Prostate gland (tissue), 2 donors: ENCODE measurements at regions of chr17 and their contacts with region 1.

Region 1: GRCh38 chr17:31558748-31559644 is 167.5 kb downstream of the RAB11FIP4 start:
- DNase-seq: peak; percentile 68
- H3K4me3 ChIP-seq: peak overlapping the region; percentile 56 to 74
- H3K27ac ChIP-seq: peak overlapping the region; percentile 91 to 92
- H3K4me1 ChIP-seq: peaks cover 14% of the 10 kb centered on the region
- H3K27me3 ChIP-seq: no peaks in the 10 kb centered on the region
- CTCF ChIP-seq: peak; percentile 87 to 97 (median 97)
- POLR2A ChIP-seq: peak; percentile 48

Region 2: DNA sequence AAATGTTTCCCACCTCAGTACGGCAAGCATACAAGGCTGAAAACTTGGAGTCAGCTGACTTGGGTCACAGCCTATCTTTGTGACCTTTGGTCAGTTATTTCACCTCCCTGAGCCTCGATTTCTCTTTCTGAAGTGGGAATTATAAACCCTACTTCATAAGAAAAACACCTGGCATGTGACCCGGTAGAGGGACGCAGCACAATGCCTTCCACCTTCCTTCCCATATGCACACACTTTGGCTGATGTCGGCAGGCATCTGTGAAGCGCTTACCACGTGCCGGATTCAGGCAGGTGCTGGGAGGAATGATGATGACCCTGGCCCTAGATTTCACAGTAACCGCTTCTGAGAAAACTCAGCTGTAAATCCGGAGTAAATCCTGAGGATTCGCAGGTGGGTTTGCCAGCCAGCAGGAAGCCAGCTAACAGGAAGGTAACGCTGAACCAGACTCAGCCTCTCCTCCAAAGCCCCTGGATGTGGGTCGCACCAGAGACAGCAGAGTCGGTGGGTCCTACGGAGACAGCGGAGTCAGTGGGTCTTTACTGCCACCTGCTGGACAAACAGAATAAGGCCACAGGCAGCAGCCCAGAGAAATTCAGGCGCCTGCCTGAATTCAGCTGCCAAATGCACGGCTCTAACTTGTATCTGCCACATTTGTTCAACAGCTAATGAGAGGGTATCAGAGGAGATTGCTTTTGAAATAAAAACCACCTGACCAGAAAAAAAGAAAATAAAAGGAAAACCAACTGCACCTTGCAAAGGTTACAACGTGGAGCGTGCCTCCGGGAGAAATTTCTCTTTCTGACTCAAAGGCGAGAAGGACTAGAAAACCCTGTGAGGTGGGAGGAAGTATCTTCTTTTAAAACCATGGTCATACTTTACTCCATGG is 283.4 kb after region 1 on chr17:
- intact Hi-C with region 1: loop called (anchors 1 kb)
- DNase-seq: peak; percentile 75
- H3K4me3 ChIP-seq: peak overlapping the region in 1 of 2 donors; percentile 10
- H3K27ac ChIP-seq: peak overlapping the region; percentile 65 to 71
- H3K4me1 ChIP-seq: peaks cover 6% of the 10 kb centered on the region
- H3K27me3 ChIP-seq: no peaks in the 10 kb centered on the region
- CTCF ChIP-seq: peak; percentile 95 to 98 (median 96)
- POLR2A ChIP-seq: no peak

Region 3: DNA sequence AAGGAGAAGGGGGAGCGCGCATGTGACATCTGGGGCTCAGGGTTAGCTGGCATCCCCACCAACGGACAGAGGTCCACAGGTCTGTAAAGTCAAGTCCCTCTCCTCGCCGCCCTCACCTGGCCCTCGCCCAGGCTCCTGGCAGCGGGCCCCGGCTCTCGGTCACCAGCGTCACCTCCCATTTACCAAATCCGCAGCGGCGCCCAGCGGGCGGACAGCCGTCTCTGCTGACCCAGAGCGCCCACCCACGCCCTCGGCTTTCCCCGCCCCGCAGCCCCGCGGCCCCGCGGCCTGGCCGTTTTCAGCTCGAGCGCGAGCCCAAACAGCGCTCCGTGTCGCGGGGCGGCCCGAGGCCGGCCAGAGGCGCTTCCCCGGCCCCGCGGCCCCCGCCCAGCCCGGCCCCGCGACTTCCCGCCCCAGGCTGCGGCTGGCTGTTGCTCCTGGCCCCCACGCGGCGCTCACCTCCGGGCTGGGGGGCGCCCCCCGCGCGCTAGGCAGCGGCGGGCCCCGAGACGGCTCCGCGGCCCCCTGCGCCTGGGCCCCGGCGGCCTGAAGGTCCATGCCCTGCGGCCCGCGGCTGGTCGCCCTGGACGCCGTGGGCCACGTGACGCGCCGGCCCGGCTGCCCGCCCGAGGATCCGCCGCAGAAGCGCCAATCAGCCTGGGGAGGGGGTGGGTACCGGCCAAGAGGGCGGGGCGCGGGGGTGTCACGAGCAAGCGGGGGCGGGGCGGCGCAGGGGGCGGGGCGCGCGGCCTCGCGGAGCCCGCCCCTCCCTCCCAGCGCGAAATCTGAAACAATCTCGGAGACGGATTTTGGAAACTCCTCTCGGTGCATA is 299.9 kb after region 1 on chr17 and contains the start of gene COPRS:
- intact Hi-C with region 1: loop called (anchors 5 kb)
- DNase-seq: peak; percentile 88
- H3K4me3 ChIP-seq: peak within 1 kb of the TSS; percentile 83 to 88
- H3K27ac ChIP-seq: peak within 1 kb of the TSS; percentile 84 to 90
- H3K4me1 ChIP-seq: peaks cover 4% of the 10 kb centered on the region
- H3K27me3 ChIP-seq: no peaks in the 10 kb centered on the region
- CTCF ChIP-seq: peak in 3 of 4 experiments; percentile 8 to 37 (median 12)
- POLR2A ChIP-seq: peak; percentile 10
- total RNA-seq, gene COPRS: 124 to 125 TPM